GM13976 (cell line): ENCODE measurements at regions of chr4 and their contacts with region 1.

Region 1: DNA sequence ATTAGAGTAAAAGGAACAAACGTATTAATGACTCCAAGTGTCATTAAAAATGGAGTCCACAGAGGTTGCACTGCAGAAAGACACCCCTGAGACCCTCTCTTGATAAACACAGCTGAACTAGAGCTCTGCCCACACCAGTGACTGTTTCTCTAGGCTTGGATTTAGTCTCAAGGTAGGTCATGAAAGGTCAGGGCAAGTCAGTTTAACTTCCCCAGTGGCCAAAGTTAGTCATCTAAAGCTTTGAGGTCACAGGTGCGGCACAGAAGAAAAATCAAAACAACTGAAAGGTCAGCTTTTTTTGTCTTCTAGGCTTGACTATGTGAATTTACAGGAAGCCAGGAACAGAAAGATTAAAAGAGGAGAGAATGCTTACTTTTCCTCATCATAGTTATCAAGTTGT is 749.6 kb downstream of the RAB28 start:
- DNase-seq: no peak
- CTCF ChIP-seq: no peak

Region 2: DNA sequence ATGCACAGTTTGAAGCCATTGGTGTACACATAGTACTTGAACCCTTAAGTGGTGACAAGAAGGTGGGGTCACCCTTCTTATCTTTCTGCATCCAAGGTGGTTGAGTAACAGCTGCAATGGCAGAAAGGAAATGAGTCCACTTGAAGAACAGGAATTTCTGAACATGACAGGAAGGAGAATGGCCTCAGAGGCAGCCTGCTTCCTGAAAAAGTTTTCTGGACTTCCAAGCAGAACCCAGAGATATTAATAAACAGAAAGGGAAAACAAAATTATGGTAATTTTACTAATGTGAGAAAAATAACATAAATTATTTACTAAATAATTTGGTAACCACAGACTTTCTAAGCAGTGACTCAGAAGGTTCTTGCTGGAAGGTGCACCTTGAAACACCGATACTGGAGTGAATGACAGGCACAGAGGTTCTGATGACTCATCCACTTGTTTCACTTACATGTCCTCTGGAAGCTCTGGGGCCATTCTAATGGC is 1185.9 kb before region 1 on chr4:
- in situ Hi-C with region 1: no loop called
- DNase-seq: no peak
- CTCF ChIP-seq: no peak

Region 3: GRCh38 chr4:12203945-12204344 is 530.6 kb before region 1 on chr4:
- in situ Hi-C with region 1: no loop called
- DNase-seq: no peak
- CTCF ChIP-seq: no peak

Region 4: GRCh38 chr4:13396161-13396560 is 661.6 kb after region 1 on chr4:
- in situ Hi-C with region 1: no loop called
- DNase-seq: no peak
- CTCF ChIP-seq: no peak

Region 5: GRCh38 chr4:13548984-13549546 is 814.5 kb after region 1 on chr4:
- in situ Hi-C with region 1: loop called (anchors 10 kb)
- DNase-seq: peak; percentile 87
- CTCF ChIP-seq: peak; percentile 69